ENCODE measurements at regions of chr1 and their contacts with region 1.

Region 1: DNA sequence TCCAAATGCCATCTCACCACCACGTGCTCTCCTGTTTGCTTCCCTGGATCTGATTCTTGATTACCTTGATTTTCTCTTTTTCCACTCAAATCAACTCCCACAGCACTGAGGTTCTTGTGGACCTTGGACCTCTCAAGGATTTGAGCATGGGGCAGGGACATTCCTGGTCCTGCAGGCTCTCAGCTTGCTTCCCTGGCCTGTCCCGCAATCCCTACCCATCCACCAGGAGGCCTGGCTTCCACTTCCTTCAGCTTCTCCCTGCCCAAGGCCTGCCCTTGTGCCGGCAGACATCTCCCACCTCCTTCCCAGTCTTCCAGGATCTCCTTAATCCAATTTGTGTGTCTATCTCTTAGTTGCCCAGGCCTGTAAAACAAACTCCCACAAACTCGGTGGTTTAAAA is 21.6 kb downstream of the PLA2G2A start:
- DNase-seq: no peak
- ATAC-seq: no peak
- H3K4me3 ChIP-seq: no peak overlapping the region
- H3K27ac ChIP-seq: no peak overlapping the region
- H3K4me1 ChIP-seq: no peaks in the 10 kb centered on the region
- H3K27me3 ChIP-seq: peaks cover 0 to 36% (median 12%) of the 10 kb centered on the region in 7 donors
- CTCF ChIP-seq: no peak

Region 2: DNA sequence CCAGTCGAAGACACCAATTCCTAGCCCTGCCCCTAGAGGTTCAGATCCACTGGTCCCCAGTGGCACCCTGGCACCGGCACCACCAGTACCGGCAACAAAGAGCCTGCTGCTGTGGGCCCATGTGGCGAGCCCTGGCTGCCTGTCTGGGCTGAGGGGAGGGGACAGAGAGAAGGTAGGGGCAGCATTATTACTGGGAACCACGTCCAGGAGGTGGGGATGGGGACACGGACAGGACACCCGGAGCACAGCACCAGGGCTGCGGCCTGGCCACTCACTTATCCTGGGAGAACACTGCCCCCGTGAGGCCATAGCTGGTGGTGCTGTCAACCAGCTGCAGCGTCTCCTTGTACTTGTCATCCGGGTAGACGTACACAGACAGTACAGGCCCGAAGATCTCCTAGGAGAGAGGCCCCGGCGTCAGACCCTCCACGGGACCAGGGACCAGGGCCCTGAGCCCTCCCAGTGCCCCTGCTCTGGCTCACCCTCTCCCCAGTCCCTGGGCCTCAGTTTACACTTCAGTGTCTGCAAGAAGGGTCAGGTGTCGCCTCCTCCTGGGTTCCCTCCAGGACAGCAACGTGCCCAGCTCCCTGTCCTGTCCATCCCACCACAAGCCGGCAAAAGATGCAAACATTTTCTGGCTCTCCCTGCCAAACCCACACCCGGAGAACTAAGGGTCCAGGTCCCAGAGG is 1082.5 kb before region 1 on chr1:
- intact Hi-C with region 1: no loop called
- DNase-seq: peak; percentile 77 to 79
- ATAC-seq: peak; percentile 47 to 84 (median 77)
- H3K4me3 ChIP-seq: no peak overlapping the region
- H3K27ac ChIP-seq: no peak overlapping the region
- H3K4me1 ChIP-seq: peaks cover 0 to 11% (median 6%) of the 10 kb centered on the region in 9 donors
- H3K27me3 ChIP-seq: no peaks in the 10 kb centered on the region
- CTCF ChIP-seq: peak; percentile 55 to 87 (median 86)

Region 3: GRCh38 chr1:19559641-19560040 is 398.1 kb before region 1 on chr1:
- intact Hi-C with region 1: no loop called
- DNase-seq: no peak
- ATAC-seq: no peak
- H3K4me3 ChIP-seq: no peak overlapping the region
- H3K27ac ChIP-seq: no peak overlapping the region
- H3K4me1 ChIP-seq: peaks cover 0 to 25% (median 20%) of the 10 kb centered on the region in 9 donors
- H3K27me3 ChIP-seq: no peaks in the 10 kb centered on the region
- CTCF ChIP-seq: no peak

Region 4: GRCh38 chr1:19909392-19909791 is 48.4 kb before region 1 on chr1:
- intact Hi-C with region 1: loop called in 1 of 10 experiments (anchors 5 kb)
- DNase-seq: no peak
- ATAC-seq: no peak
- H3K4me3 ChIP-seq: no peak overlapping the region
- H3K27ac ChIP-seq: no peak overlapping the region
- H3K4me1 ChIP-seq: no peaks in the 10 kb centered on the region
- H3K27me3 ChIP-seq: no peaks in the 10 kb centered on the region
- CTCF ChIP-seq: no peak

Region 5: GRCh38 chr1:20110679-20111078 is 152.9 kb after region 1 on chr1:
- intact Hi-C with region 1: no loop called
- DNase-seq: peak in 1 of 2 donors; percentile 15
- ATAC-seq: peak in 5 of 8 donors; percentile 34 to 59 (median 46)
- H3K4me3 ChIP-seq: no peak overlapping the region
- H3K27ac ChIP-seq: no peak overlapping the region
- H3K4me1 ChIP-seq: peaks cover 0 to 12% (median 0%) of the 10 kb centered on the region in 9 donors
- H3K27me3 ChIP-seq: peaks cover 0 to 29% (median 4%) of the 10 kb centered on the region in 7 donors
- CTCF ChIP-seq: no peak

Region 6: DNA sequence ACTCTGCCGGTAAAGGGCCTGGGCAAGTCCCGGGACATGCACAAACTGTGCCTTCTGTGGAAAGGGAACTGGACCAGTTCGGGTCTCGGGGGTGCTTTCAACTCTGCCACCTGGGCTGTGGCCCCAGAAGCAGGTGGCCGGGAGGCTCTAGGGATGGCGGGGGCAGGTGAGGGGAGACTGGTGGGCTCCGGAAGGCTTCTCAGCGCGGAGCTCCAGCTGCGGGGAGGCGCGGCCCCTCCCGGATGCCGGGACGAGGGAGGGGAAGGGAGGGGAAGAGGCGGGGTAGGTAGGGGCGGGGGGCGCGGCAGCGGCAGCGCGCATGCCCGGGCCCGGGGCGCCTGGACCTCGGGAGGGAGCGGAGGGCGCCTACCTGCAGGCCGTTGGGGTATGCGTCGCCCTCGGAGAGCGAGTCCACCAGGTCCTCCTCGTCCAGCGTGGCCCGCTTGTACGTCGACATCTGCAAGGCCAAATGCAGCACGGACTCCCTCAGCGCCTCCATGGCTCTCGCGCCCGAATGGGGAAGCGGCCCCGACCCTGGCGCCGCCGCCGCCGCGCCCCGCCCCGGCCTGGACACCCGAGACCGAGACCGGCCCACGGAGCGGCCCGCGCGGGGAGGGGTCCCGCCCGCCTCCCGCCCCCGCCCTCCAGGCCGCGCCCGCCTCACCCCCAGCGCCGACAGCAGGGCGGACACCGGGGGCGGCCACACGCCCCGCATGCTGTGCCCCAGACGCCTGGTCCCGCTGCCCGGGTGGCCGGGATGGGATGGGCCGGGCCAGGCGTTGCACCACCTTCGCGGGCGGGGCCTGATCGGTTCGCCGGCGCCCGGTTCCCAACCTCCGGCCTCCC is 1332.1 kb after region 1 on chr1 and contains the start of gene ECE1:
- intact Hi-C with region 1: no loop called
- DNase-seq: peak; percentile 52 to 56
- ATAC-seq: peak; percentile 55 to 71 (median 60)
- H3K4me3 ChIP-seq: peak within 1 kb of the TSS; percentile 38 to 92 (median 75)
- H3K27ac ChIP-seq: peak within 1 kb of the TSS; percentile 66 to 94 (median 90)
- H3K4me1 ChIP-seq: peaks cover 7 to 76% (median 50%) of the 10 kb centered on the region in 9 donors
- H3K27me3 ChIP-seq: no peaks in the 10 kb centered on the region
- CTCF ChIP-seq: no peak
- total RNA-seq, gene ECE1: 30.6 to 81.8 (median 53.1) TPM

Measured in heart right ventricle (tissue), 16 donors.